IMR-90 (cell line): ENCODE measurements at regions of chr12 and their contacts with region 1.

Region 1: GRCh38 chr12:62581288-62582064 is 114.8 kb downstream of the MON2 start:
- DNase-seq: peak; percentile 73
- ATAC-seq: peak; percentile 90
- H3K4me3 ChIP-seq: no peak overlapping the region
- H3K27ac ChIP-seq: no peak overlapping the region
- H3K4me1 ChIP-seq: no peaks in the 10 kb centered on the region
- H3K27me3 ChIP-seq: no peaks in the 10 kb centered on the region
- CTCF ChIP-seq: peak; percentile 73
- POLR2A ChIP-seq: no peak
- RAD21 ChIP-seq: peak; percentile 77

Region 2: GRCh38 chr12:62331306-62331705 is 250.2 kb before region 1 on chr12:
- CTCF ChIA-PET with region 1: no interaction called
- POLR2A ChIA-PET with region 1: no interaction called
- dilution Hi-C with region 1: no loop called
- in situ Hi-C with region 1: no loop called
- intact Hi-C with region 1: no loop called
- DNase-seq: no peak
- ATAC-seq: no peak
- H3K4me3 ChIP-seq: no peak overlapping the region
- H3K27ac ChIP-seq: no peak overlapping the region
- H3K4me1 ChIP-seq: peaks cover 2% of the 10 kb centered on the region; the same call in 1 of the 2 replicates
- H3K27me3 ChIP-seq: no peaks in the 10 kb centered on the region
- CTCF ChIP-seq: no peak
- POLR2A ChIP-seq: no peak
- RAD21 ChIP-seq: no peak

Region 3: DNA sequence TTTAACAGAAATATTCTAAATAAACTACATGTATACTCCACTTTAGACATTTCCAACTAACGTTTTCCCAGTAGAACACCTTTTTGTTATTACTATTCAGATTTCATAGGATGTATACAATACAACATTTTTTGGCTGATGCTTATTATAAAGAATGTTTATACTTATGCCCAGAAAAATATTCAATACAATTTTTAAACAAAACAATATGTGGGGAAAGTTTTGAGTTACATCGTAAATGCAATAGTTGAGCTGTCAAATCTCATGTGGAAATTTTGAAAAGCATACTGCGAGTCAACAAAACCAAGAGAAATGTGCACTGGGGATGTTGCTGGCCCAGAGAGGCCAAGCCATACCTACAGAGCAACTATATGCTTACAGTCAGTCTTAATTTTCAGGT is 133.0 kb before region 1 on chr12:
- CTCF ChIA-PET with region 1: no interaction called
- POLR2A ChIA-PET with region 1: no interaction called
- dilution Hi-C with region 1: no loop called
- in situ Hi-C with region 1: no loop called
- intact Hi-C with region 1: no loop called
- DNase-seq: no peak
- ATAC-seq: no peak
- H3K4me3 ChIP-seq: no peak overlapping the region
- H3K27ac ChIP-seq: no peak overlapping the region
- H3K4me1 ChIP-seq: no peaks in the 10 kb centered on the region
- H3K27me3 ChIP-seq: peaks cover 9% of the 10 kb centered on the region
- CTCF ChIP-seq: no peak
- POLR2A ChIP-seq: no peak
- RAD21 ChIP-seq: no peak

Region 4: DNA sequence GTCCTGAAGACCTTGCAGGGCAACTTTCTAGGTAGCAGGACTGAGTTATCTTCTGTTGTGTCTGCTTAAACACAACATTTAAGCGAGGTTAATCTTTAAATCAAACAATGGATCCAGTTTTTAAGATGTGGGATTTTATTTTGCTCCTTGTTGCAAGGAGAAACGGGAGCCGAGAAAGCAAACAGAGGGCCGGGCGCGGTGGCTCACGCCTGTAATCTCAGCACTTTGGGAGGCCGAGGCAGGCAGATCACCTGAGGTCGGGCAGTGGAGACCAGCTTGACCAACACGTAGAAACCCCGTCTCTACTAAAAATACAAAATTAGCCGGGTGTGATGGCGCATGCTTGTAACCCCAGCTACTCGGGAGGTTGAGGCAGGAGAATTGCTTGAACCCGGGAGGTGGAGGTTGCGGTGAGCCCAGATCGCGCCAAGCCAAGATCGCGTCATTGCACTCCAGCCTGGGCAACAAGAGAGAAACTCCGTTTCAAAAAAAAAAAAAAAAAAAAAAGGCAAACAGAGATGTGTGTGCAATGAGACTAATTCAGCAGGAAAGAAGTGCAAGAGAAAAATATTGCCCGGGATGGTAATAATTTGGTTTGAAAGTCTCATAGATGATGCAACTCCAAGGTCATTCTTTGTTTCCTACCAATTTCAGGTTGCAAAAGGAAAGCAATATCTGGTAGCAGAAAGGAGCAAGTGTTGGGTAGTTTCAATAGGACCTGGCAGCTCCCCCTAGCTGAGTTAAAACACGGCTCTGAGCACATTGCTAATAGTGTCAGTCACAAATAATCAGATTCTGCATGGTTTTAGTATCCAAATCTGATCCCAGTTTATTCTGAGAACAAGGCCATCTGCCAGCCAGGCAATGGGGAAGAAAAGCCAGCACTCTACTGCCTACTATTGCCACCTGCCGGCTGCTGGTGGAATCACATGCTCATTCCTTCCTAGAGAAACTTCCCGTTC is 212.1 kb after region 1 on chr12:
- CTCF ChIA-PET with region 1: interaction called, 32 read pairs
- POLR2A ChIA-PET with region 1: no interaction called
- dilution Hi-C with region 1: loop called (anchors 25 kb)
- in situ Hi-C with region 1: loop called (anchors 5 kb)
- intact Hi-C with region 1: loop called (anchors 1 kb)
- DNase-seq: peak; percentile 87
- ATAC-seq: peak; percentile 99
- H3K4me3 ChIP-seq: no peak overlapping the region
- H3K27ac ChIP-seq: no peak overlapping the region
- H3K4me1 ChIP-seq: no peaks in the 10 kb centered on the region
- H3K27me3 ChIP-seq: no peaks in the 10 kb centered on the region
- CTCF ChIP-seq: peak; percentile 97
- POLR2A ChIP-seq: no peak; the same call in 1 of the 2 replicates
- RAD21 ChIP-seq: peak; percentile 99

Region 5: GRCh38 chr12:62799126-62799736 is 217.8 kb after region 1 on chr12:
- CTCF ChIA-PET with region 1: interaction called, 32 read pairs
- POLR2A ChIA-PET with region 1: no interaction called
- dilution Hi-C with region 1: loop called (anchors 25 kb)
- in situ Hi-C with region 1: loop called (anchors 5 kb)
- intact Hi-C with region 1: loop called (anchors 1 kb)
- DNase-seq: peak; percentile 72
- ATAC-seq: peak; percentile 94
- H3K4me3 ChIP-seq: no peak overlapping the region
- H3K27ac ChIP-seq: no peak overlapping the region
- H3K4me1 ChIP-seq: no peaks in the 10 kb centered on the region
- H3K27me3 ChIP-seq: no peaks in the 10 kb centered on the region
- CTCF ChIP-seq: peak; percentile 93
- POLR2A ChIP-seq: no peak
- RAD21 ChIP-seq: peak; percentile 95

Region 6: GRCh38 chr12:62860501-62861411 is 279.3 kb after region 1 on chr12:
- CTCF ChIA-PET with region 1: no interaction called
- POLR2A ChIA-PET with region 1: no interaction called
- dilution Hi-C with region 1: no loop called
- in situ Hi-C with region 1: no loop called
- intact Hi-C with region 1: no loop called
- DNase-seq: peak; percentile 43
- ATAC-seq: peak; percentile 43
- H3K4me3 ChIP-seq: peak overlapping the region; percentile 10; the same call in 1 of the 2 replicates
- H3K27ac ChIP-seq: no peak overlapping the region
- H3K4me1 ChIP-seq: peaks cover 16% of the 10 kb centered on the region
- H3K27me3 ChIP-seq: no peaks in the 10 kb centered on the region; the same call in none of the 2 replicates
- CTCF ChIP-seq: no peak
- POLR2A ChIP-seq: no peak
- RAD21 ChIP-seq: no peak

Region 7: DNA sequence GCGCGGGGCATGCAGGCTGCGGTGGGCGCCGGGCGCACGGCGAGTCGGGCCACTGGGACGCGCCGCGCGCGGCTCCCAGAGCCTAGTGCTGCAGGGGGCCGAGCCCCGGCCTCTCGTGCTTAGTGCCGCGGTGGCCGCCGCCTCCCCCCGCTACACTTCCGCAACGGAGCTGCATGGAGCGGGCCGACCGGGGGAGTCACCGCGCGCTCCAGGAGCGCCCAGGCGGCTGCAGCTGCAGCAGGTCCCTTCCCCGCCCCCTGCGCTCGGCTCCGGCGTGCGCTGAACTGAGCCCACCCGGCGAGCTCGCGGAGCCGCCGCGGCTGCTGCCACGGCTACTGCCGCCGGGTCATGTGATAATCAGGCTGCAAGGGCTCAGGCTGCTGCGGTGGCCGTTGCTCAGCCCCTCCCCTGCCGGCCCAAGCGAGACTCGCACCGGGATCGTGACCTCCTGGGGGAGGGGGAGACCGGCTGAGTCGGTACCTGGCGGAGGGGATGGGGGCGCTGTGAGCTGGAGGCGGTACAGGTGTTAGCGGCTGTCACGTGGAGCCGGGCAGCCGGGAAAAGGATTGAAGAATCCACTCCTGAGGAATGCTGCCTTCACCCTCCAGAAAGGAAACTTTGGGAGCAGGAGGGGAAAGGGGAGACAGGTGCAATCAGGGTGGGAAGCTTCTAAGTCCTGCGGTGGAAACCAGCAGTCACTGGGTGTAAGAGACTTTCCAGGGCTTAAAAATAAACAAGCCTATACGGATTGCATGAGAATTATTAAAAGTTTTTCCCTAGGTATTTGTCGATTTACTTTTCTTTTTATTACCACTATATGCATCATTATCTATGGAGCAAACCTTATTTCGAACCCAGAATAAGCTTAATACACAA is 353.6 kb after region 1 on chr12 and contains the start of gene PPM1H:
- CTCF ChIA-PET with region 1: no interaction called
- POLR2A ChIA-PET with region 1: no interaction called
- dilution Hi-C with region 1: no loop called
- in situ Hi-C with region 1: no loop called
- intact Hi-C with region 1: loop called (anchors 10 kb)
- DNase-seq: peak; percentile 11
- ATAC-seq: peak; percentile 86
- H3K4me3 ChIP-seq: peak within 1 kb of the TSS; percentile 60
- H3K27ac ChIP-seq: no peak within 1 kb of the TSS
- H3K4me1 ChIP-seq: peaks cover 2% of the 10 kb centered on the region; the same call in 1 of the 2 replicates
- H3K27me3 ChIP-seq: peaks cover 36% of the 10 kb centered on the region
- CTCF ChIP-seq: no peak; the same call in 1 of the 2 replicates
- POLR2A ChIP-seq: no peak
- RAD21 ChIP-seq: no peak
- total RNA-seq, gene PPM1H: 0.18 and 0.28 TPM in 2 replicates

Region 8: GRCh38 chr12:62983599-62984022 is 402.1 kb after region 1 on chr12:
- CTCF ChIA-PET with region 1: no interaction called
- POLR2A ChIA-PET with region 1: no interaction called
- dilution Hi-C with region 1: no loop called
- in situ Hi-C with region 1: no loop called
- intact Hi-C with region 1: no loop called
- DNase-seq: no peak
- ATAC-seq: no peak
- H3K4me3 ChIP-seq: no peak overlapping the region
- H3K27ac ChIP-seq: no peak overlapping the region
- H3K4me1 ChIP-seq: no peaks in the 10 kb centered on the region
- H3K27me3 ChIP-seq: no peaks in the 10 kb centered on the region
- CTCF ChIP-seq: no peak
- POLR2A ChIP-seq: no peak
- RAD21 ChIP-seq: 0 out of 2 replicates have a peak, but pooled peaks have one; percentile 6